ENCODE measurements at regions of chr6 and their contacts with region 1.

Region 1: DNA sequence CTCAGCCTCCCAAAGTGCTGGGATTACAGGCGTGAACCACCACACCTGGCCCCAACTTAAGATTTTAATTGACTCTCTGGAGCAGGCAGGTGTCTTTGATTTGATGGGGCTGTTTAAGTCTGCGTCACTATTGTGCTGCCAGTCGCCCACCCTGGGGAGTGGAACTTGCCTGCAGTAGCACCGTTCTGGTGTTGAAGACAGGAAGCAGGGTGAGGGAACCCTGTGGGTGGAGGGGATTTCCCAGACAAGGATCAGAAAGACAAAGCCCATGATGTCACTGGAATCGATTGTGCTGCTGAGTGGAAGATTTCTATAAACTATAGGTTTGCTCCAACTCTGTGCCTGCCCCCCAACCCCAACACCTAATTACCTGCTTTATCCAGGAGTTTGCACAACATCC is 11.0 kb downstream of the ALDH8A1 start:
- DNase-seq: peak in 28 of 35 experiments; percentile 13 to 71 (median 40)
- ATAC-seq: peak in 2 of 4 experiments; percentile 41 to 99
- H3K4me3 ChIP-seq: no peak overlapping the region
- H3K4me3 Mint-ChIP-seq: no peak overlapping the region
- H3K27ac ChIP-seq: no peak overlapping the region
- H3K27ac Mint-ChIP-seq: no peak overlapping the region
- H3K4me1 ChIP-seq: peaks cover 6% of the 10 kb centered on the region in 2 experiments
- H3K4me1 Mint-ChIP-seq: peaks cover 5 to 10% (median 9%) of the 10 kb centered on the region in 3 donors
- H3K27me3 ChIP-seq: no peaks in the 10 kb centered on the region
- H3K27me3 Mint-ChIP-seq: no peaks in the 10 kb centered on the region

Region 2: GRCh38 chr6:134111062-134111677 is 827.7 kb before region 1 on chr6:
- CTCF ChIA-PET with region 1: interaction called, 11 to 13 read pairs
- POLR2A ChIA-PET with region 1: interaction called in 1 of 2 experiments, 3 read pairs
- DNase-seq: peak in 27 of 35 experiments; percentile 7 to 78 (median 25)
- ATAC-seq: peak; percentile 43 to 57 (median 49)
- H3K4me3 ChIP-seq: no peak overlapping the region
- H3K4me3 Mint-ChIP-seq: no peak overlapping the region
- H3K27ac ChIP-seq: no peak overlapping the region
- H3K27ac Mint-ChIP-seq: no peak overlapping the region
- H3K4me1 ChIP-seq: no peaks in the 10 kb centered on the region
- H3K4me1 Mint-ChIP-seq: peaks cover 0 to 9% (median 3%) of the 10 kb centered on the region in 3 donors
- H3K27me3 ChIP-seq: peaks cover 0 to 18% of the 10 kb centered on the region in 2 experiments
- H3K27me3 Mint-ChIP-seq: peaks cover 15 to 20% of the 10 kb centered on the region in 2 donors

Region 3: DNA sequence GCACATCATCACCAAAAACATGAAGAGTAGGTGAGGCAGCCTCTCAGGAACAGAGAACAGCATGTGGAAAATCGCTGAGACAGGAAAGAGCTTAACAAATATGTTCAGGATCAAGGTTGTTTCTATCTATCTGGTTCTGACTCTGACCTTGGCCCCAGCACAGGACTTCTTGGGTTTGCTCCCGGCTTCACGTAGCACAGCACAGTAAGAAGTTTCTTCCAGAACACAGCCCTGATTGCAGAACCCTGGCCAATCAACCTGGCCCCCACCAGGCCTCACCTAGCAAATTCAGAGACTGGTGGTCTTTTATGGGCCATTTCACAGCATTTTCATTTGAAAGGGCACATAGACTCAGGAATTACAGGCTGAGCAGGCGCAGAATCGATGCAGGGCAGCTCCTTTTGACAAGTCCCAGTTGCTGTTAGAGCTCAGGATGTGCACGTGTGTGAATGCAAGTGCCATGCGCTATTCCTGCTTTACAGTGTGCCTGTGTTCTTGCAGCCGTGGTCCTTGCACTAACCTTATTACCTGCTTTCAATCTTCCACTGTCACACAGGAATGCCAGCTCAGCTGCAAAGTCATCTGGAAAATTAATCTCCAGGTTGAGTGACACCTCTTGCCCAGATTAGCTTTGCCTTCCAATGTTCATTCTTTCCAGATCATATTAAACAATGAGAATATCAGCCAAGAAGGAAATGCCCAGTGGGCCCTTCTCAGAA is 786.0 kb before region 1 on chr6:
- CTCF ChIA-PET with region 1: interaction called, 39 to 43 read pairs
- POLR2A ChIA-PET with region 1: interaction called in 1 of 2 experiments, 3 read pairs
- DNase-seq: no peak
- ATAC-seq: no peak
- H3K4me3 ChIP-seq: no peak overlapping the region
- H3K4me3 Mint-ChIP-seq: no peak overlapping the region
- H3K27ac ChIP-seq: no peak overlapping the region
- H3K27ac Mint-ChIP-seq: no peak overlapping the region
- H3K4me1 ChIP-seq: no peaks in the 10 kb centered on the region
- H3K4me1 Mint-ChIP-seq: no peaks in the 10 kb centered on the region
- H3K27me3 ChIP-seq: peaks cover 0 to 3% of the 10 kb centered on the region in 2 experiments
- H3K27me3 Mint-ChIP-seq: peaks cover 0 to 2% of the 10 kb centered on the region in 2 donors

Region 4: DNA sequence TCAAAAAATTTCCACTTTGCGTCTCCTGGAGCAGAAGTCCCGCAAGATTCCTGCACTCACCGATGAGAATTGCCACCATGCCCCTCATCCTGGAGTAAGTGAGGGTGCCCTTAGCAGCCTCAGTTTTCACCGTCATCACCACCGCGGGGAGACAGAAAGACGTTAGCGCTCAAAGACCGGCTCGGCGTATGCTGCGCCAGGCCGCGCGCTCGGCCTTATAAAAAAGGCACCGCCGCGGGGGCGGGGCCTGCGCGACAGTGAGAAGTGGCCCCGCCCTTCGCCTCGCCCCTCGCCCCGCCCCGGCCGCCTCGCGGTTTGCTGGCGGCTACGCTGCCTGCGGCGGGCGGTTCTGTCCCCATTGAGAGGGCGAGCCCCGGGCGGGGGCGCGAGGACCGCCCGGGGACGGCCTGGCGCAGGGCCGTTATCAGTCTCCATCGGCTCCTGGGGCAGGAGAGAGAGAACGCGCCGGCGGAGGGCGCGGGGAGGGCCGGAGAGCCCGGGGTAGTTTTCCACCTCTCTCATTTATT is 764.2 kb before region 1 on chr6:
- CTCF ChIA-PET with region 1: interaction called in 1 of 2 experiments, 24 read pairs
- POLR2A ChIA-PET with region 1: interaction called in 1 of 2 experiments, 3 read pairs
- DNase-seq: peak; percentile 78 to 97 (median 92)
- ATAC-seq: peak; percentile 75 to 87 (median 80)
- H3K4me3 ChIP-seq: peak overlapping the region; percentile 66 to 78
- H3K4me3 Mint-ChIP-seq: peak overlapping the region; percentile 94 to 99 (median 97)
- H3K27ac ChIP-seq: peak overlapping the region; percentile 82
- H3K27ac Mint-ChIP-seq: peak overlapping the region; percentile 95 to 98
- H3K4me1 ChIP-seq: peaks cover 50 to 57% of the 10 kb centered on the region in 2 experiments
- H3K4me1 Mint-ChIP-seq: peaks cover 74 to 81% (median 75%) of the 10 kb centered on the region in 3 donors
- H3K27me3 ChIP-seq: no peaks in the 10 kb centered on the region
- H3K27me3 Mint-ChIP-seq: no peaks in the 10 kb centered on the region

Region 5: GRCh38 chr6:134918418-134918961 is 20.4 kb before region 1 on chr6:
- CTCF ChIA-PET with region 1: interaction called, 4 to 13 read pairs
- POLR2A ChIA-PET with region 1: no interaction called
- DNase-seq: no peak
- ATAC-seq: no peak
- H3K4me3 ChIP-seq: no peak overlapping the region
- H3K4me3 Mint-ChIP-seq: no peak overlapping the region
- H3K27ac ChIP-seq: no peak overlapping the region
- H3K27ac Mint-ChIP-seq: no peak overlapping the region
- H3K4me1 ChIP-seq: no peaks in the 10 kb centered on the region
- H3K4me1 Mint-ChIP-seq: no peaks in the 10 kb centered on the region
- H3K27me3 ChIP-seq: no peaks in the 10 kb centered on the region
- H3K27me3 Mint-ChIP-seq: no peaks in the 10 kb centered on the region

Measured in T-cell (primary cell).